Activated T-helper 2 cell treated with anti-CD3 and anti-CD28 coated beads, Interferon-gamma antibody, Interleukin-2, Interleukin-4, amounts not matched to agents 10 μg/mL and 5 μg/mL and 100 μg/mL, durations not matched to agents 14 hours and 24 hours and 36 hours (primary cell): ENCODE measurements at regions of chr1 and their contacts with region 1.

Region 1: GRCh38 chr1:41739061-41739955 is 179.4 kb downstream of the HIVEP3 start:
- DNase-seq: peak; percentile 63
- H3K4me3 Mint-ChIP-seq: peak overlapping the region; percentile 64
- H3K27ac Mint-ChIP-seq: peak overlapping the region; percentile 95
- H3K4me1 Mint-ChIP-seq: peaks cover 88% of the 10 kb centered on the region
- H3K27me3 Mint-ChIP-seq: no peaks in the 10 kb centered on the region

Region 2: DNA sequence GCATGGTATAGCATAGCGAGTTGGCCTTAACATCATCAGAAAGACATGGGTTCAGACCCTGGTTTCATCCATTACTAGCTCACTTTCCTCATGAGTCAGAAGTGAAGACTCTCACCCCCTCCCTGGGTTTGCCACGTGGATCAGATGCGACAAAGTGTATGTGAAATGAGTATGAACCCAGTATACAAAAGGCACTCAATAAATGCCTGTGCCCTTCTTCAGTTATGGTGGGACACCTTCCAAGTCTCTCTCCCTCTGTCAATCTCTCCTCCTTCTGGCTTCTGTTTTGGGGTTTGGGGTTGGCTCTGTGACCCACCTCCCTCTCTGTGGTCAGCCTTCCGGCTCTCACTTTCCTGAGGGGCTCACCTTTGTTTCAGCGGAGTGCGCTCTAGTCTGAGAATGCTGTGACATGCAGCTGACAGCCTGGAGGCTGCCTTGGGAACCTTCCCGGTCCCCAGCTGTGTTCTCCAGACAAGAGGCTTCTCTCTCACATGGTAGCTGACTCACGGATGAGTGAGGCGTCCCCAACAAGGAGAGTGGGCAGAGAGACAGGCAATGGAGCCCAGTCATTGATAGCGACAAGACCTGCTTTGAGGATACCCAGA is 99.9 kb before region 1 on chr1:
- intact Hi-C with region 1: loop called (anchors 1 kb)
- DNase-seq: no peak
- H3K4me3 Mint-ChIP-seq: peak overlapping the region; percentile 60
- H3K27ac Mint-ChIP-seq: no peak overlapping the region
- H3K4me1 Mint-ChIP-seq: peaks cover 46% of the 10 kb centered on the region
- H3K27me3 Mint-ChIP-seq: no peaks in the 10 kb centered on the region

Region 3: DNA sequence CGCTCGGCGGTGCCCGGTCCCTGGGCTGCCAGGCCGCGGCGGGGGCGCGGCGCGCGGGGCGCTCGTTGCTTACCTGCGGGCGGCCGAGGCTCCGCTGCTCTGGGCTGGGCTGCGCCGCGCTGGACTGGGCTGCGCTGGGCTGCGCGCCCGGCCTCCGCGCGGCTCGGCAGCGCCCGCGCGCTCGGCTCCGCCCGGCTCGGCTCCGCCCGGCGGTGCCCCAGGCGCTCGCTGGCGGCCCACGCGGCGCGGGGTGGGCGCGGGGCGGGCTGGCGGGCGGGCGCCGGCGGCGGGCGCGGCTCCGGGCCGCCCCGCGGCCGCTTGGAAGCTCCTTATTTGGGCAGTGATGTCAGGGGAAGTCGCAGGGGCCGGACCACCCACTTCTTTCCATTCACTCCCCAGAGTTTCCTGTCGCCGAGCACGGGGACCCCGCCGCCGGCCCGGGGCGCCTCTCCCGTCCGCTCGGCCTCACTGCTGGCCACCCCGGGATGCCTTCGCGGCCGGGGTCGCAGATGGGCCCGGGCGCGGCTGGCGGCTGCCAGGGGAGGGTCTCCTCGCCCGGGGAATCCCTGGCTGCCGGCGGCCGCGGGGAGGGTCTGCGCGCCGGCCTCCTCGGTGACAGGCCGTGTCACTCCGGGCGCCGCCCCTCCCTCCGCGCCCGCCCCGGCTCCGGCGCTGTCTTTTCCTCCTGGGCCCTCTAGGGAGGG is 77.1 kb before region 1 on chr1:
- intact Hi-C with region 1: loop called (anchors 2 kb)
- DNase-seq: peak; percentile 75
- H3K4me3 Mint-ChIP-seq: peak overlapping the region; percentile 60
- H3K27ac Mint-ChIP-seq: peak overlapping the region; percentile 28
- H3K4me1 Mint-ChIP-seq: peaks cover 75% of the 10 kb centered on the region
- H3K27me3 Mint-ChIP-seq: no peaks in the 10 kb centered on the region

Region 4: DNA sequence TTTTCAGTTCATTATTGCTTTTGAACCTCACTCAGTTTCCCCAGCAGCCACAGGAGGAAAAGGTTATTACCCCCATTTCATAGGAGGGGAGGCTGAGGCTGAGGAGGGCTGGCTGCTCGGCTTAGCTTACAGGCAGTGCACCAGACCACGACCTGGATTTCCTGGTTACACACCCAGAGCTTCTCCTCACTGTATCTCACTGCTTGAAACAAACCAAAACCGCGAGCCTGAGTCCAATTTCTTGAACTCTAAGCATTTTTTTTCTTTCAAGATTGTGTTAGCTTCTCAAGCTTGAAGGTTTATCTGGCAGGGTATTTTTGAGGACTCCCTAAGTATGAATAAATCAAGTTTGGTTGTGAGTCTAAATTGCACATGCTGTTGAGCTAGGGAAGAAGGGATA is 65.9 kb before region 1 on chr1:
- intact Hi-C with region 1: loop called (anchors 2 kb)
- DNase-seq: peak; percentile 59
- H3K4me3 Mint-ChIP-seq: peak overlapping the region; percentile 51
- H3K27ac Mint-ChIP-seq: peak overlapping the region; percentile 92
- H3K4me1 Mint-ChIP-seq: peaks cover 92% of the 10 kb centered on the region
- H3K27me3 Mint-ChIP-seq: no peaks in the 10 kb centered on the region

Region 5: DNA sequence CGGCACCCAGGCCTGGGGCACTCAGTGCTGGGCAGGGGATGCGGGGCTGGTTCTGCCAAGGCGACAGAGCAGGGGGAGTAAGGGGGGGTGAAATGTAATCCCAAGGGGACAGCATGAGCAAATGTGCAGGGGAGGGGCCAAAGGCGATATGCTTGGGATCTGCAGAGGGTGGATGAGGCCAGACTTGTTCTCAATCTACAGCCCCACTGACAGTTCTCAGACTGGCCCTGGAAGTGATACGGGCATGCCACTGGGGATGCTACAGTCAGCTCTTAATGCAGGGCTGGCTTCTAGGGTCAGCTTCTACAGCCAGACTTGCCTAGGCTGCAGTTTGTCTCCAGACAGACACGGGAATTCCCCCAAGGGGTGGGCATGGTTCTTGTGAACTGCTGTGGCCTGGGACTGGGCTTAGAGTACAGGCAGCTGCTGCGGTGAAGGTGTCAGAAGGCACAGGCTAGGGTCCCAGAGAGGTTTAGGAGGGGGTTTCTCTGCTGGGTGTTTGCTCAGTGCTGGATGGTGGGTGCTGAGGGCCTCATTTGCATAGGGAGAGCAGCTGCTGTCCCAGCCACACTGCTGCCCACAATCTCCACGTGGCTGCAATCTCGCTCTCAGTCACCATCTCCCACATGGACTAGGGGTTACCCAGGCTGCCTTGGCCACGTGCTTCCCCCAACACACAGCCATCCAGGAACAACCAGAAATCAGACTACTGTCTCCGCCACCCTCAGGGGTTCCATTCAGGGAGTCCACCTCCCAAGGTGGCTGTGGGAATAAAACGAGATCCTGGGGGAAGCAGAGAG is 10.7 kb before region 1 on chr1:
- intact Hi-C with region 1: loop called (anchors 1 kb)
- DNase-seq: peak; percentile 20
- H3K4me3 Mint-ChIP-seq: no peak overlapping the region
- H3K27ac Mint-ChIP-seq: peak overlapping the region; percentile 67
- H3K4me1 Mint-ChIP-seq: peaks cover 43% of the 10 kb centered on the region
- H3K27me3 Mint-ChIP-seq: no peaks in the 10 kb centered on the region

Region 6: GRCh38 chr1:41751804-41752513 is 12.7 kb after region 1 on chr1:
- intact Hi-C with region 1: loop called (anchors 1 kb)
- DNase-seq: no peak
- H3K4me3 Mint-ChIP-seq: no peak overlapping the region
- H3K27ac Mint-ChIP-seq: peak overlapping the region; percentile 66
- H3K4me1 Mint-ChIP-seq: peaks cover 73% of the 10 kb centered on the region
- H3K27me3 Mint-ChIP-seq: no peaks in the 10 kb centered on the region

Region 7: DNA sequence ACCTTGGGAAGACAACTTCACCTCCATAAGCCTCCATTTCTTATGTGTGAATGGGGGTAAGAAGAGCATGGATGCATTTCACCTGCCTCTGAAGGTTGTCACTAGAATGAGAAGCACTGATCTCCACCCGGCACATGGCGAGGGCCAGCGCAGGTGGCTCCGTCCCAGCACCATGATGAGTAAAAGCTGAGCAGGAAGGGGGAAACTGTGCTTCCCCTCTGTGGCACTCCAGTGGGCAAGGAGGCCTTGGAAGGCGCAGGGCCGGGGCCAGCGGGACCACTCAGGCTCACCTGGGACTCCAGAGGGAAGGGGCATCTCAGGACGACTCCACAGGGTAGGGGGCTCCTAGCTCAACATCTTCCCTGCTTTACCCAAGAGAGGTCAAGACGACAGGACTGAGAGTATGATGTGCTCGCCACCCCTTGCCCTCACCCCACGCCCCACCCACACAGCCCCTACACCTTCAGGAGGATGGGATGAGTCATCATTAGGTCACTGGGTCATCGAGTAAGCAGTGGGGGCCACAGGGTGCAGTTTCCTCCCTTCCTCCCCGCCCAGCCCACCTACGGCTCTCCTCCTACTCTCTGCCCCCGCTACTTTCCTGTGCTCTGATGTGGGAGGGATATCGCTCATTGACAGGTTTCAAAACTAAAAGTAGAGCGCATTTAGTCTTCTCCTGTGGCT is 67.3 kb after region 1 on chr1:
- intact Hi-C with region 1: loop called (anchors 2 kb)
- DNase-seq: peak; percentile 44
- H3K4me3 Mint-ChIP-seq: peak overlapping the region; percentile 59
- H3K27ac Mint-ChIP-seq: peak overlapping the region; percentile 62
- H3K4me1 Mint-ChIP-seq: peaks cover 84% of the 10 kb centered on the region
- H3K27me3 Mint-ChIP-seq: no peaks in the 10 kb centered on the region

Region 8: GRCh38 chr1:41823471-41823870 is 84.2 kb after region 1 on chr1:
- intact Hi-C with region 1: no loop called
- DNase-seq: no peak
- H3K4me3 Mint-ChIP-seq: no peak overlapping the region
- H3K27ac Mint-ChIP-seq: no peak overlapping the region
- H3K4me1 Mint-ChIP-seq: peaks cover 16% of the 10 kb centered on the region
- H3K27me3 Mint-ChIP-seq: peaks cover 2% of the 10 kb centered on the region